ENCODE measurements at regions of chr2 and their contacts with region 1.

Region 1: DNA sequence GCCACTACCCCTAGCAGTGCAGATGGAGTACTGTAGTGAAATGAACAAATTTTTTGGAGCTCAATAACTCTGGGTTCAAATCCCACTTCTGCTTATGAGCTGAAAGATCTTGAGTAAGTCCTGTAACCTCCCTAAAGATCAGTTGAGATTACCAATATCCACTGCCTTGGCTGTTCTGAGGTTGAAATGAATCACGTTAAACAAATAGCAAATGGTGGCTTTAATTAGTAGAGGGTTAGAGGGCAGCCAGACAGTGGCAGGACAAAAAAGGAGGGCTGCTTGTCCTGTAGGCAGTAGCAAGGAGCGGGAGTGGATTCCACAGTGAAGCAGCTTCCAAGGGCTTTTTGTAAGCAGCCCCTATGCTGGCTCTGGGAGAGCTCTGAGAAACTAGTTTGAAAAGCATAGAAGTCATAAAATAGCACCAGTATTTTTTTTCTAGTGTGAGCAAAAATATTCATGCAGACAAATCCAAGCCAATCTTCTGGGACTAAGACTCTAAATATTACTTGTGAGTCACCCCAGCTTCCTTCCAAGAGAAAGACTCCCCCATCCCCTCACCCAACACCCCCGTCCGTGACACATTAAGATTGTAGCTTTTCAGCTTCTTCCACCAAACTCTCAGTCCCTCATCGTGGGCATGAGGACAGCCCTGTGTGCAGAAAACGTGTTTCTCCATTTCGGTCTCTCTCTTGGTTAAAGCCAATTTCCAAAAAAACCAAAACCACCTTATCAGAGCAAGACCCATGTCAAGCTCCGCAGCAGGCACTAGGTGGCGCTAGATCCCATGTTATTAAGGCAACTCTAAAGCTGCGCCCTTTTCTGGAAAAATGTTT is 123.5 kb upstream of the LGALSL start:
- DNase-seq: peak; percentile 82
- H3K4me3 Mint-ChIP-seq: peak overlapping the region; percentile 54
- H3K27ac Mint-ChIP-seq: peak overlapping the region; percentile 46
- H3K4me1 Mint-ChIP-seq: peaks cover 41% of the 10 kb centered on the region
- H3K27me3 Mint-ChIP-seq: no peaks in the 10 kb centered on the region

Region 2: GRCh38 chr2:64052468-64053241 is 277.8 kb before region 1 on chr2:
- CTCF ChIA-PET with region 1: interaction called, 320 read pairs
- POLR2A ChIA-PET with region 1: interaction called, 8 read pairs
- intact Hi-C with region 1: loop called (anchors 1 kb)
- DNase-seq: no peak
- H3K4me3 Mint-ChIP-seq: no peak overlapping the region
- H3K27ac Mint-ChIP-seq: no peak overlapping the region
- H3K4me1 Mint-ChIP-seq: peaks cover 36% of the 10 kb centered on the region
- H3K27me3 Mint-ChIP-seq: no peaks in the 10 kb centered on the region

Region 3: DNA sequence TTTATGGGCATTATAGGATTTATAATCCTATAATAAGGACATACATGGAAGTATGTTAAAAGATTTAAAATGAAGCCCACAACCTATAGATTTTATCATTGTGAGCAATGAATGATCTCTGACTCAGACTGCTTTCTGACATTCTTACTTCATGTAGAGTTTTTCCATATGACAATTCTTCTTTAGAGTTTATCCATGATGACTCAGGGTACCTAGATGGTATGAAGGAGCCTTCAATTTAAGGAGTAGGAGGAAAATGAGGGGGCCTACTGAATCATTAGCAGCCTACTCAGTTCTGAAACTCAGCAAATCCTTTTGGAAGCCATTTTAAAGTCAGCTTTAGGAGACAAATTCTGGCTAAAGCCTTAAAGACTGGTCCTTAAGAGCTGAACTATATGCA is 196.7 kb before region 1 on chr2:
- CTCF ChIA-PET with region 1: interaction called, 7 read pairs
- POLR2A ChIA-PET with region 1: interaction called, 28 read pairs
- intact Hi-C with region 1: loop called (anchors 1 kb)
- DNase-seq: no peak
- H3K4me3 Mint-ChIP-seq: peak overlapping the region; percentile 12
- H3K27ac Mint-ChIP-seq: peak overlapping the region; percentile 83
- H3K4me1 Mint-ChIP-seq: peaks cover 84% of the 10 kb centered on the region
- H3K27me3 Mint-ChIP-seq: no peaks in the 10 kb centered on the region

Region 4: GRCh38 chr2:64228126-64228678 is 102.3 kb before region 1 on chr2:
- CTCF ChIA-PET with region 1: interaction called, 11 read pairs
- POLR2A ChIA-PET with region 1: interaction called, 9 read pairs
- intact Hi-C with region 1: no loop called
- DNase-seq: peak; percentile 76
- H3K4me3 Mint-ChIP-seq: peak overlapping the region; percentile 88
- H3K27ac Mint-ChIP-seq: peak overlapping the region; percentile 82
- H3K4me1 Mint-ChIP-seq: peaks cover 33% of the 10 kb centered on the region
- H3K27me3 Mint-ChIP-seq: peaks cover 2% of the 10 kb centered on the region

Region 5: DNA sequence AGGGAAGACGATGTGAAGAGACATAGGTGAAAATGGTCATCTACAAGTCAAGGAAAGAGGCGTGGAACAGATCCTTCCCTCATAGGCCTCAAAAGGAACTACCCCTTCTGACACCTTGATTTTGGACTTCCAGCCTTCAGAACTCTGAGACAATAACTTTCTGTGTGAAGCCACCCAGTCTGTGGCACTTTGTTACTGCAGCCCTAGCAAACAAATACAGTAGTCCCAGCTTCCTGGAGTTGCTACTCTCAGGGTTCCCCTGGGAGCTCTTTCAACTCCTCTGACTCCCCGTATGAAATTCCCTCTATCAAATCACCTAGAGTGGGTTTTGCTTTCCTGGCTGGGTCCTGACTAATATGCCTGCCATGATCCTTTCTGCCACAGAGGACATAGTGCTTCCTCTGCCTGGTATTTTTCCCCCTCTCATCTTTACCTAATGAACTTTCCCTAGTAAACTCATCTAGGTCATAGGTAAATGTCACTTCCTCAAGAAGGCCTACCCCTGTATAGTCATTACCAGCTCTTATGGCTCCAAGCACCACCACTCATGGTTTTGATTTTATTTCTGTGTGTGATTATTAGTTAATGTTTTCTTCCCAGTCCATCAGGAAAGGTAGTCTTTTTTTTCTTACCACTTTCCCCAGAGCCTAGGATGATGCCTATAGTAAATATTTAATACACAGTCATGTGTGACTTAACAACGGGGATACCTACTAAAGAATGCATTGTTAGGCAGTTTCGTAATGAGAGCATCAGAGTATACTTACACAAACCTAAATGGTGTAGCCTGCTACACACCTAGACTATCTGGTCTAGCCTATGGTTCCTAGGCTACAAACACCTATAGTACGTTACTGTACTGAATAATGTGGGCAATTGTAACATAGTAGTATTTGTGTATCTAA is 11.9 kb after region 1 on chr2:
- CTCF ChIA-PET with region 1: interaction called, 12 read pairs
- POLR2A ChIA-PET with region 1: no interaction called
- intact Hi-C with region 1: no loop called
- DNase-seq: no peak
- H3K4me3 Mint-ChIP-seq: no peak overlapping the region
- H3K27ac Mint-ChIP-seq: no peak overlapping the region
- H3K4me1 Mint-ChIP-seq: no peaks in the 10 kb centered on the region
- H3K27me3 Mint-ChIP-seq: peaks cover 5% of the 10 kb centered on the region

Region 6: GRCh38 chr2:64523666-64524603 is 193.4 kb after region 1 on chr2 and contains the start of gene AFTPH:
- CTCF ChIA-PET with region 1: interaction called, 35 read pairs
- POLR2A ChIA-PET with region 1: interaction called, 13 read pairs
- intact Hi-C with region 1: no loop called
- DNase-seq: peak; percentile 100
- H3K4me3 Mint-ChIP-seq: peak within 1 kb of the TSS; percentile 99
- H3K27ac Mint-ChIP-seq: peak within 1 kb of the TSS; percentile 98
- H3K4me1 Mint-ChIP-seq: peaks cover 31% of the 10 kb centered on the region
- H3K27me3 Mint-ChIP-seq: peaks cover 2% of the 10 kb centered on the region
- total RNA-seq, gene AFTPH: 34.8 to 36.4 TPM